Aorta (tissue), 5 donors: ENCODE measurements at regions of chr3 and their contacts with region 1.

Region 1: GRCh38 chr3:12841149-12841970 is at the start of gene RPL32:
- DNase-seq: peak; percentile 92 to 93
- ATAC-seq: peak; percentile 97
- H3K4me3 ChIP-seq: peak within 1 kb of the TSS; percentile 87 to 91
- H3K27ac ChIP-seq: peak within 1 kb of the TSS in 1 of 2 donors; percentile 90
- H3K4me1 ChIP-seq: no peaks in the 10 kb centered on the region
- H3K27me3 ChIP-seq: no peaks in the 10 kb centered on the region
- total RNA-seq, gene RPL32: 1,255 to 1,309 TPM

Region 2: DNA sequence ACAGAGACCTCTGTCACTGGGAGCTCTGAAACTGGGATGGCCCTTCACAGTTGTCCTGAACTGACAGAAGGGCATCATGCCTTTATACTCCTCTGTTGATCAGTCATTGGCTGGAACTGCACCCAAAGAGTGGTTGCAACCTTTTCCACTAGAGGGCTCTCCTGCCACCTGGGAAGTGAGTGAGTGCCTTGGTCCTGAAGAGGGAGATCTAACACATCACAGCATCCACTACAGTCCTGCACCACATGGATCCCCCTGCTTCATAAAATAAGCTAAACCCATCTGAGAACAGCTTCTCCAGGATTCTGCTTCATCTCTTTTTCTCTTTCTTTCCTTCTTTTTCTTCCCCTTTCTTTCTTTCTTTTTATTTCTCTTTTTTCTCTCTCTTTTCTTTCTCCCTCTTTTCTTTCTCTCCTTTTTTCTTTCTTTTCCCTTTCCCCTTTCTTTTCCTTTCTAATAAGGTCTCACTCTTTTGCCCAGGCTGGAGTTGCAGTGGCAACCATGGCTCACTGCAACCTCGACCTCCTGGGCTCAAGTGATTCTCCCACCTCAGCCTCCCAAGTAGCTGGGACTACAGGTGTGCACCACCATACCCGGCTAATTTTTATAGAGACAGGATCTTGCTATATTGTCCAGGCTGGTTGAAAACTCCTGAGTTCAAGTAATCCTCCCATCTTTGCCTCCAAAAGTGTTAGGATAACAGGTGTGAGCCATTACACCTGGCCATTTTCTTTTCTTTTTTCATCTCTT is 134.7 kb before region 1 on chr3:
- intact Hi-C with region 1: loop called in 1 of 2 experiments (anchors 5 kb)
- DNase-seq: peak in 1 of 2 donors; percentile 67
- ATAC-seq: peak; percentile 82
- H3K4me3 ChIP-seq: no peak overlapping the region
- H3K27ac ChIP-seq: no peak overlapping the region
- H3K4me1 ChIP-seq: peaks cover 0 to 2% of the 10 kb centered on the region in 2 donors
- H3K27me3 ChIP-seq: no peaks in the 10 kb centered on the region